Naive thymus-derived CD4-positive, alpha-beta T cell (primary cell): ENCODE measurements at regions of chr1 and their contacts with region 1.

Region 1: DNA sequence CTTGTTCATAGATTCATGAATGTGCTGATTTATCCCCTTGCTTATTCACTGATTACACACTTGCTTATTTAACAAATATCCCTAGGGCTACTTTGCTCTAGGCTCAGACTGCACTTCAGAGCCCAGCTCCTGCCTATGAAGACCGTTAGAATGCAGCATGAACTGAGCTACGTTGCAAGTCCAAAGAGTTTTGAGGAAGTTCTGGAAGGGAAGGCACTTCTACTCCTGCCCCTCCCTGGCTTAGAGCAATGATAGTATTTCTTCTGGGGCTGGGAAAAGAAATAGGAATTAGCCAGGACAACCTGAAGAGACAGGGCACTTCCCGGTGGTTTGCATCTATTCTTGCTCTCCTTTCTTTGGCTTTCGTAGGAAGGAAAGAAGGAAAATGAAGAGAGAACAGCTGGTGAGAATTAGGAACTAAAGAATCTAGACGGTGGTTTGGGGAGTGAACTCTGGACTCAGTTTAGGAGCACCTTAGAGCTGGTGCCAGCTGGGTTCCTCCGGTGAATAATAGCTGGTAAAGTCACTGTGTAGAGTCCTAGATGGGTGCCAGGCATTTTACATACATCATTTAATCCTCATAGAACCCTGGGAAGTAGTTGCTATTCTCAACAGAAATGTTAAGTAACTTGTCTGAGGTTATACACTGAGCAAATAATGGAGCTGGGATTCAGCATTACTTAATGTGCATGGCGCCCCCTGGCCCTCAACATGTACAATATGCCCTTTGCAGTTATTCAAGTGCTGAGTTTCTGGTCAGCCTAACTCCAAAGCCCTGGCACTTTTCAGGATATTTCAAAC is 65.9 kb downstream of the NDUFS5 start:
- DNase-seq: peak in 8 of 9 donors; percentile 33 to 61 (median 46)
- ATAC-seq: peak; percentile 82
- H3K4me3 ChIP-seq: no peak overlapping the region
- H3K4me3 Mint-ChIP-seq: peak overlapping the region in 1 of 10 donors; percentile 51
- H3K27ac ChIP-seq: no peak overlapping the region
- H3K27ac Mint-ChIP-seq: no peak overlapping the region
- H3K4me1 ChIP-seq: no peaks in the 10 kb centered on the region
- H3K4me1 Mint-ChIP-seq: peaks cover 4 to 11% (median 5%) of the 10 kb centered on the region in 7 donors
- H3K27me3 ChIP-seq: no peaks in the 10 kb centered on the region
- H3K27me3 Mint-ChIP-seq: peaks cover 0 to 5% (median 3%) of the 10 kb centered on the region in 5 donors

Region 2: DNA sequence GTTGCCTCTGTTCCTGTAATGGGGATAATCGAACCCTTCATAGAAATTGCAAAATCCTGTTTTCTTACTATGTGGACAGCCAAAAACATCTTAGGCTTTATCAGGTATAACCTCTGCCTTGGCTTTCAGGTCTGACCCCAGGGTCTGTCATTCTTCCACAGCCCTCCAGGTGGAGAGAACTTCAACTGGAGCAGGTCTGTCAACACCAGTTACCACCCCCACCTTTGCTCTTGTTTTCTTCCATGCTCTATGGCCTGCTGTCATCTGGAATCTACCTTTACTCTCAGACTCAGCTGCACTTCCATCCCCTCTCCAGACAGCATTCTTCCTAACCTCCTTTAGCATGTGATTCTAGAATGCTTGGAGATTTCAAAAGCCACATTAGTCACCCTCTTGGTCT is 200.3 kb before region 1 on chr1:
- CTCF ChIA-PET with region 1: interaction called, 5 read pairs
- POLR2A ChIA-PET with region 1: no interaction called
- intact Hi-C with region 1: loop called in 1 of 2 experiments (anchors 1 kb)
- DNase-seq: peak in 3 of 9 donors; percentile 4 to 13 (median 10)
- ATAC-seq: no peak
- H3K4me3 ChIP-seq: no peak overlapping the region
- H3K4me3 Mint-ChIP-seq: no peak overlapping the region
- H3K27ac ChIP-seq: no peak overlapping the region
- H3K27ac Mint-ChIP-seq: peak overlapping the region in 1 of 9 donors; percentile 62
- H3K4me1 ChIP-seq: no peaks in the 10 kb centered on the region
- H3K4me1 Mint-ChIP-seq: peaks cover 0 to 2% (median 0%) of the 10 kb centered on the region in 7 donors
- H3K27me3 ChIP-seq: no peaks in the 10 kb centered on the region
- H3K27me3 Mint-ChIP-seq: peaks cover 0 to 19% (median 0%) of the 10 kb centered on the region in 5 donors